Activated B cell treated with CpG ODN at 0.5 μM for 24 hours (primary cell): ENCODE measurements at regions of chr10 and their contacts with region 1.

Region 1: GRCh38 chr10:79195091-79195923 is 126.5 kb downstream of the ZMIZ1 start:
- DNase-seq: peak; percentile 68
- ATAC-seq: peak; percentile 63
- H3K4me3 Mint-ChIP-seq: no peak overlapping the region
- H3K27ac Mint-ChIP-seq: no peak overlapping the region
- H3K4me1 Mint-ChIP-seq: peaks cover 14% of the 10 kb centered on the region
- H3K27me3 Mint-ChIP-seq: peaks cover 8% of the 10 kb centered on the region
- CTCF ChIP-seq: peak; percentile 98

Region 2: DNA sequence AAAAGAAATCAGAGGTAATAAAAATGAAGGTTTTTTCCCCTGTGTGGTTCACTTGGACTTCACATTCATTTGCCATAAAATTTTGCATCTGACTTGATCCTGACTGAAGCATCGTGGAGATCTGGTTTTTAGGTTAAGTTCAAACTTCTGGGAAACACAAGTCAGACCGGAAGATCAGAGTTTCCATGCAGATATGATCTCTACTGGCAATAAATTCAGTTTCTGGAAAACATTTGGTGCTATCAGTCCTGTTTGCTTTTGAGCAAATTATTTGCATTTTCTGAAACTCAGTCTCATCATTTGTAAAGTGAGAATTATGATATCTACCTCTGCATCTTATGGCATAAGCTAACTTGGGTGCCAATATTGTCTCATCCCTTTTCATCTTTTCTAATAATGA is 1476.3 kb before region 1 on chr10:
- CTCF ChIA-PET with region 1: no interaction called
- POLR2A ChIA-PET with region 1: no interaction called
- intact Hi-C with region 1: loop called (anchors 2 kb)
- DNase-seq: no peak
- ATAC-seq: no peak
- H3K4me3 Mint-ChIP-seq: no peak overlapping the region
- H3K27ac Mint-ChIP-seq: no peak overlapping the region
- H3K4me1 Mint-ChIP-seq: peaks cover 2% of the 10 kb centered on the region
- H3K27me3 Mint-ChIP-seq: peaks cover 11% of the 10 kb centered on the region
- CTCF ChIP-seq: no peak

Region 3: GRCh38 chr10:78258323-78259030 is 936.8 kb before region 1 on chr10:
- CTCF ChIA-PET with region 1: interaction called, 9 read pairs
- POLR2A ChIA-PET with region 1: no interaction called
- intact Hi-C with region 1: loop called (anchors 1 kb)
- DNase-seq: no peak
- ATAC-seq: no peak
- H3K4me3 Mint-ChIP-seq: no peak overlapping the region
- H3K27ac Mint-ChIP-seq: no peak overlapping the region
- H3K4me1 Mint-ChIP-seq: no peaks in the 10 kb centered on the region
- H3K27me3 Mint-ChIP-seq: peaks cover 11% of the 10 kb centered on the region
- CTCF ChIP-seq: no peak

Region 4: DNA sequence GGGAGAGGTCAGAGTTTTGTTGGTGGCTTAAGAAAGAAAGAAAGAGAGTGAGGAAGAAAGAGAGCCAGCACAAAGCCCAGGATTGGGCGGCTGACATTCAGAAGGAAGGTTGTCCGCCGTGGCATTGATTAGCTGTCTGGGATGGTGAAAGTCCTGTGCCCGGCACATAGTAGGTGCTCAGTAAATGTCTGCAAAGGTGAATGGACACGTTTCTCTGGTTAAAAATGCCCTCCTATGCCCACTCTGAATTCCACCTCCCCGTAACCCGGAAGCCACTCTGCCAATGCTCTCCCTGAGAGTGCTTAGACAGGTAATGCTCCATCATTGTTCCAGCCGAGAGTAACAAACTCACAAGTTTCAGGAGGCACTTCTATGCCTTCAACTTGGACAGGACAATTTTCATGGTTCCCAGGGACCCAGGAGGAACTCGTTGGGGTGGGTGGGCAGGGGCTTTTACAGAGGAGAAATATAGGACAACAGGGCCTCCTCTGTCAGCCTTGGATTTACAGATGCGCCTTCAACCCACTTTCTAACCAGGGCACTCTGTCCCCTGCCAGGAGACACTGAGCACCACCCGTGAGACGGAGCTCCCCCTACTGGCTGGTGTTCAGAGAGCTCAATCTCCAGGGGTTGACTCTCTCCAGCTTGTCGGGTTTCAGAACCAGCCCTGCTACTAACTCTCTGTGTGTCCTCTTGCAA is 538.0 kb before region 1 on chr10:
- CTCF ChIA-PET with region 1: interaction called, 6 read pairs
- POLR2A ChIA-PET with region 1: no interaction called
- intact Hi-C with region 1: loop called (anchors 1 kb)
- DNase-seq: peak; percentile 33
- ATAC-seq: no peak
- H3K4me3 Mint-ChIP-seq: no peak overlapping the region
- H3K27ac Mint-ChIP-seq: no peak overlapping the region
- H3K4me1 Mint-ChIP-seq: peaks cover 16% of the 10 kb centered on the region
- H3K27me3 Mint-ChIP-seq: peaks cover 11% of the 10 kb centered on the region
- CTCF ChIP-seq: no peak

Region 5: DNA sequence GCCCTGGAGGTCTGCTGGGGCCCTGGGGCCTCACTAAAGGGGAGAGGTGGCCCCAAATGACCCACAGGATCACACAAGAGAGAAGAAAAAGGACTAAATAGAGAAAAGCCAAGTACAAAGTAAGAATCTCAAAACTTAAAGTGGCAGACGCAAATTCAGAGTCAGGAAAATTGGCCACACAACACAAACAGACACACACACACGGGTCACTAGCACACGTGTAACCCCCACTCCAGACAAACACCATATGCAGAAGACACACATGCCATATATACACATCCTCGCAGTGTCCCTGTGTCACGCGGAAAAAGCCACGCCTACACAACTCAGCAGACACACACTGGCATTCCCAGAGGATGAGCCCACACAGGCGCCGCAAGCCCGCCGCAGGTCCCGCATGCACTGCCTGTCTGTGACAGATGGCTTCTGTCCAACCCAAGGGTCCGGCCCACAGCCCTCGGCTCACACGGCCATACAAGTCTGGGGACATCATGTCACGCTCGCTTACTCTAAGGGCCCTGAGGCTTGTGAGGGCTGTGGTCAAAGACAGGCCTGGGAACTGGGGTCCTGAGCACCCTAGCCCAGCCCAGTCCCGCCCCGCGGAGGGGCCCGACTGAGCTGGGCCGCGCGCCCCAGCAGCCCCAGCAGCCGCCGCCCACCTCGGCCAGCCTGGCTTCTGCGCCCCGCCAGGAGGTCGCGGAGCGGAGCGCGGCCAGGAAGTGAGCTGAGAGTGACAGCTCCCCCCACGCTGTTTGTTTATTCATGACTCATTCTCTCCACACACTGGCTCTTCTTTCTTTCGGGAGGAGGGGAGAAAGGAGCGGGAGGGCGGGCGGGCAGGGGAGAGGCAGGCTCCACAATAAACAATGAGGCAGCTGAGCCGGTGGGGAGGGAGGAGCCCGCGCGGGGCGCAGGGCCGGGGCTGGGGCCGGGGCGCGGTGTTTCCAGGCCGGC is 222.1 kb before region 1 on chr10:
- CTCF ChIA-PET with region 1: no interaction called
- POLR2A ChIA-PET with region 1: no interaction called
- intact Hi-C with region 1: loop called (anchors 2 kb)
- DNase-seq: peak; percentile 41
- ATAC-seq: peak; percentile 61
- H3K4me3 Mint-ChIP-seq: peak overlapping the region; percentile 73
- H3K27ac Mint-ChIP-seq: no peak overlapping the region
- H3K4me1 Mint-ChIP-seq: peaks cover 14% of the 10 kb centered on the region
- H3K27me3 Mint-ChIP-seq: peaks cover 52% of the 10 kb centered on the region
- CTCF ChIP-seq: no peak

Region 6: DNA sequence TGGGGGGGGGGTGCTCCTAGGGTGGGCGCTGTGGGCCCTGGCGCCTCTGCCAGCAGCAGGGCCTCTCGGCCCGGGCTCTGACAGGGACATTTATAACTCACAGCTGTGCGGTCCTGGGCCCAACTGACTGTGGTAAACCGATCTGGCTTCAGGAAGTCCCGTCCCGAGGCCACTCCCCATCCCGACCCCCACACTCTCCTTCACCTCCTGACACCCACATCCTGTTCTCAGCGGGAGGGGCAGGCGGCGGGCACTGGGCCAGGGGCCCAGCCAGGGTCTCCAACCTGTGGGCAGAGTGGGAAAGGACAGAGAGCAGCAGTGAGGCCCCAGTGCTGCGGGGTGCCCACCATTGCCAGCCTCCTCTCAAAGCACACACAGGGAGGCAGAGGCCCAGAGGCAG is 57.5 kb before region 1 on chr10:
- CTCF ChIA-PET with region 1: no interaction called
- POLR2A ChIA-PET with region 1: no interaction called
- intact Hi-C with region 1: no loop called
- DNase-seq: no peak
- ATAC-seq: peak; percentile 47
- H3K4me3 Mint-ChIP-seq: peak overlapping the region; percentile 11
- H3K27ac Mint-ChIP-seq: no peak overlapping the region
- H3K4me1 Mint-ChIP-seq: peaks cover 33% of the 10 kb centered on the region
- H3K27me3 Mint-ChIP-seq: peaks cover 16% of the 10 kb centered on the region
- CTCF ChIP-seq: no peak

Region 7: DNA sequence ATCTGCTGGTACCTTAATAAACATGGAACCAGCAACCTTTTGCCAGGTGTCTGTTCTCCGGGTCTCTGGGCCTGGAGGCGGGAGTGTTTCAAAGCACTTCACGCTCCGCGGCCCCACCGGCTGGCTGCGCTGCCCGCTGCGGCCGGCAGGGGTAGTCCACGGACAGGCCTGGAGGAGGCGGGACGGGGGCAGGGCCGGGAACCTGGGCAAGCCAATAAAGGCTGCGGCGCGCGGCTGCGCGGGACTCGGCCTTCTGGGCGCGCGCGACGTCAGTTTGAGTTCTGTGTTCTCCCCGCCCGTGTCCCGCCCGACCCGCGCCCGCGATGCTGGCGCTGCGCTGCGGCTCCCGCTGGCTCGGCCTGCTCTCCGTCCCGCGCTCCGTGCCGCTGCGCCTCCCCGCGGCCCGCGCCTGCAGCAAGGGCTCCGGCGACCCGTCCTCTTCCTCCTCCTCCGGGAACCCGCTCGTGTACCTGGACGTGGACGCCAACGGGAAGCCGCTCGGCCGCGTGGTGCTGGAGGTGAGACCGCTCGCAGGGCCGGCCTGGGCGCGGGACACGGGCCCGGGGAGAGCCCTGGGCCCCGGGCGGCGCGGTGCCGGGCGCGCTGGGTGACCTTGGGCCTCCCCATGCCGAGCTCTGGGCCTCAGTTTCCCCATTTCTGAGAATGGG is 152.1 kb after region 1 on chr10 and contains the start of gene PPIF:
- CTCF ChIA-PET with region 1: interaction called, 3 read pairs
- POLR2A ChIA-PET with region 1: interaction called, 4 read pairs
- intact Hi-C with region 1: loop called (anchors 2 kb)
- DNase-seq: peak; percentile 94
- ATAC-seq: peak; percentile 95
- H3K4me3 Mint-ChIP-seq: peak within 1 kb of the TSS; percentile 84
- H3K27ac Mint-ChIP-seq: peak within 1 kb of the TSS; percentile 90
- H3K4me1 Mint-ChIP-seq: peaks cover 25% of the 10 kb centered on the region
- H3K27me3 Mint-ChIP-seq: no peaks in the 10 kb centered on the region
- CTCF ChIP-seq: peak; percentile 47
- total RNA-seq, gene PPIF: 68.2 and 72.5 TPM in 2 replicates